AG04450 (cell line): ENCODE measurements at regions of chr3 and their contacts with region 1.

Region 1: GRCh38 chr3:55485211-55485791 is 1.8 kb downstream of the WNT5A start:
- DNase-seq: no peak
- H3K4me3 ChIP-seq: peak overlapping the region; percentile 98
- H3K27ac ChIP-seq: peak overlapping the region; percentile 97
- H3K27me3 ChIP-seq: no peaks in the 10 kb centered on the region
- CTCF ChIP-seq: peak; percentile 68

Region 2: DNA sequence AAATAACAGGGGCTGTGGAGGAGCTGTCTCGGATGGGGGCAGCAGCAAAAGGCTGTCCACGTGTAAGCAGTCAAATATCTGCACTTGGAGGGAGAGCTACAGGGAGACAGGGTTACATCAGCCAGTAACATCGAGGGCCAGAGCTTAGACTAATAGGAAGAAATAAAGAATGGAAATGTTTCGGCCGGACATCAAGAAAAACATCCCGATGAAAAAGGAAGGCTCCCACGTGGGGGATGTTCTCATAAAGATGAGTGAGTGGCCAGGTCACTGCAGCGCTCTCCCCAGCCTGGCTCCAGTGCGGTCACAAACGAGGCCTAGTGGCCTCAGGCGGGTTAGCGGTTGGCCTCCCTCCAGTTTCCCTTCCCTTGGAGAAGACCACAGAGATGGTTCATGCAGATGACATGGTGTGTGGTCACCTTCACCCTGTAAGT is 57.9 kb after region 1 on chr3:
- CTCF ChIA-PET with region 1: no interaction called
- POLR2A ChIA-PET with region 1: no interaction called
- DNase-seq: no peak
- H3K4me3 ChIP-seq: no peak overlapping the region
- H3K27ac ChIP-seq: no peak overlapping the region
- H3K27me3 ChIP-seq: peaks cover 26% of the 10 kb centered on the region
- CTCF ChIP-seq: no peak

Region 3: GRCh38 chr3:55721716-55722484 is 236.6 kb after region 1 on chr3:
- CTCF ChIA-PET with region 1: interaction called, 31 read pairs
- POLR2A ChIA-PET with region 1: interaction called, 4 read pairs
- DNase-seq: no peak
- H3K4me3 ChIP-seq: no peak overlapping the region
- H3K27ac ChIP-seq: no peak overlapping the region
- H3K27me3 ChIP-seq: peaks cover 3% of the 10 kb centered on the region
- CTCF ChIP-seq: peak; percentile 77

Region 4: DNA sequence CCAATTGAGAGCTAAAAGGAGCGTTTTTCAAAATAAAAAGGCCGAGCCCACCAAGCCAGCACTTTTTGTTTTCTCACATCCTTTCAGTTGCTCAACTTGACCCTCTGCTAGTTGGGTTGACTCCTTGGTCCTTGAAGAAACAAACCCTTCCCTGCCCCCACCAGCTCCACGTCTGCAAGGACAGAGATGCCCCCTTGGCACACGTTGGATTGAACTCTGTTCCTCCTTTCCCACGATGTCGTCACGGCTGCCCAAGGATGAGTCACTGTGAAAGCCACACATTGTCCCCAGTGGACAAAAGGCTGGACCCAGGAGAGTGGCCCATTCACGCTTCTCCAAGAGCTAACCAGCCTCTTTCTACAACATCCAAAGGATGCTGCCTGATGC is 1532.2 kb after region 1 on chr3:
- CTCF ChIA-PET with region 1: no interaction called
- POLR2A ChIA-PET with region 1: interaction called, 10 read pairs
- DNase-seq: no peak
- H3K4me3 ChIP-seq: no peak overlapping the region
- H3K27ac ChIP-seq: no peak overlapping the region
- H3K27me3 ChIP-seq: no peaks in the 10 kb centered on the region
- CTCF ChIP-seq: no peak